Activated B cell treated with CpG ODN at 0.5 μM for 24 hours (primary cell): ENCODE measurements at regions of chr1 and their contacts with region 1.

Region 1: DNA sequence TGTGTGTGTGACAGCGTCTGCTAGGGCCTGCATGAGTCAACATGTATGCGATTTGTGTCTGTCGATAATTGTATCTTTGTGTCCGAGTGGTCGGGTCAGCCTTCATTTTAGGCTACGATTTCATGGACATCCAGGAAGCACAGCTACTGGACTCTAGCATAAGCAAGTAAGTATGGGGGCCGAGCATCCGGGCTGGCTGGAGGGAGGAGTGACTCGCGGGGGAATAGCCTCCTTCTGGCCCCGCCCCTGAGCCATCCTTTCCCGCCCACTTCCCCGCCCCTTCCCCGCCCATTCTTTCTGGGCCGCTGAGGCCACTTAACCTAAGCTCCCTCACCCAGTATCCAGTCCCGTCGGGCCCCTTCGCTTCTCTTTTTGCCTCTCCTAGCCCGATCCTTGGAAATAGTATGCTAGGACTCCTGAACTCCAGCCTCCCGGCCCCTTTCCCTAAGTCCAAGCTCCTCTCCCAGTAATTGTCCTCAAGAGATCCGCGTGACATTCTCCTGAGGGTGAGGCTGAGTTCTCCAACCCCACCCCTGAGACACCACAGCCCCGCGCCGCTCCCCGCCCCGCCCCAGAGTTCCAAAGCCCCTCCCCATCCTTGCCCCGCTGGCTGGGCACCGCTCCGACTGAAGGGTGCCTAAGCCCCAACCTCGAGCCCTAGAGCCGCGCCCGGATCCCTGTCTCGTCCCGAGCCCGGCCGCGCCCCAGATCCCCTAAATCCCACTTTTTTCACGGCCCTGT is 1.2 kb downstream of the MAP3K6 start:
- DNase-seq: peak; percentile 68
- ATAC-seq: peak; percentile 71
- H3K4me3 Mint-ChIP-seq: peak overlapping the region; percentile 91
- H3K27ac Mint-ChIP-seq: peak overlapping the region; percentile 68
- H3K4me1 Mint-ChIP-seq: peaks cover 55% of the 10 kb centered on the region
- H3K27me3 Mint-ChIP-seq: no peaks in the 10 kb centered on the region
- CTCF ChIP-seq: no peak

Region 2: GRCh38 chr1:27238032-27238431 is 127.5 kb before region 1 on chr1:
- CTCF ChIA-PET with region 1: no interaction called
- POLR2A ChIA-PET with region 1: no interaction called
- intact Hi-C with region 1: no loop called
- DNase-seq: no peak
- ATAC-seq: no peak
- H3K4me3 Mint-ChIP-seq: no peak overlapping the region
- H3K27ac Mint-ChIP-seq: peak overlapping the region; percentile 18
- H3K4me1 Mint-ChIP-seq: peaks cover 36% of the 10 kb centered on the region
- H3K27me3 Mint-ChIP-seq: no peaks in the 10 kb centered on the region
- CTCF ChIP-seq: no peak

Region 3: GRCh38 chr1:27341525-27342252 is 23.9 kb before region 1 on chr1 and contains the start of gene SYTL1:
- CTCF ChIA-PET with region 1: interaction called, 6 read pairs
- POLR2A ChIA-PET with region 1: interaction called, 16 read pairs
- intact Hi-C with region 1: no loop called
- DNase-seq: peak; percentile 72
- ATAC-seq: peak; percentile 76
- H3K4me3 Mint-ChIP-seq: peak within 1 kb of the TSS; percentile 80
- H3K27ac Mint-ChIP-seq: peak within 1 kb of the TSS; percentile 87
- H3K4me1 Mint-ChIP-seq: peaks cover 67% of the 10 kb centered on the region
- H3K27me3 Mint-ChIP-seq: no peaks in the 10 kb centered on the region
- CTCF ChIP-seq: no peak
- total RNA-seq, gene SYTL1: 76.0 and 81.9 TPM in 2 replicates

Region 4: GRCh38 chr1:27349784-27350662 is 15.5 kb before region 1 on chr1:
- CTCF ChIA-PET with region 1: interaction called, 6 read pairs
- POLR2A ChIA-PET with region 1: interaction called, 22 read pairs
- intact Hi-C with region 1: no loop called
- DNase-seq: no peak
- ATAC-seq: peak; percentile 76
- H3K4me3 Mint-ChIP-seq: peak overlapping the region; percentile 44
- H3K27ac Mint-ChIP-seq: no peak overlapping the region
- H3K4me1 Mint-ChIP-seq: peaks cover 15% of the 10 kb centered on the region
- H3K27me3 Mint-ChIP-seq: no peaks in the 10 kb centered on the region
- CTCF ChIP-seq: no peak